Ovary (tissue), 10 donors: ENCODE measurements at regions of chr9 and their contacts with region 1.

Region 1: GRCh38 chr9:112074250-112075008 is 100.7 kb downstream of the SUSD1 start:
- DNase-seq: peak; percentile 45 to 73 (median 56)
- H3K4me3 ChIP-seq: no peak overlapping the region
- H3K27ac ChIP-seq: peak overlapping the region in 1 of 2 donors; percentile 34
- H3K4me1 ChIP-seq: no peaks in the 10 kb centered on the region
- H3K27me3 ChIP-seq: no peaks in the 10 kb centered on the region
- CTCF ChIP-seq: peak; percentile 52 to 91 (median 84)
- EP300 ChIP-seq: peak; percentile 92
- POLR2A ChIP-seq: no peak

Region 2: DNA sequence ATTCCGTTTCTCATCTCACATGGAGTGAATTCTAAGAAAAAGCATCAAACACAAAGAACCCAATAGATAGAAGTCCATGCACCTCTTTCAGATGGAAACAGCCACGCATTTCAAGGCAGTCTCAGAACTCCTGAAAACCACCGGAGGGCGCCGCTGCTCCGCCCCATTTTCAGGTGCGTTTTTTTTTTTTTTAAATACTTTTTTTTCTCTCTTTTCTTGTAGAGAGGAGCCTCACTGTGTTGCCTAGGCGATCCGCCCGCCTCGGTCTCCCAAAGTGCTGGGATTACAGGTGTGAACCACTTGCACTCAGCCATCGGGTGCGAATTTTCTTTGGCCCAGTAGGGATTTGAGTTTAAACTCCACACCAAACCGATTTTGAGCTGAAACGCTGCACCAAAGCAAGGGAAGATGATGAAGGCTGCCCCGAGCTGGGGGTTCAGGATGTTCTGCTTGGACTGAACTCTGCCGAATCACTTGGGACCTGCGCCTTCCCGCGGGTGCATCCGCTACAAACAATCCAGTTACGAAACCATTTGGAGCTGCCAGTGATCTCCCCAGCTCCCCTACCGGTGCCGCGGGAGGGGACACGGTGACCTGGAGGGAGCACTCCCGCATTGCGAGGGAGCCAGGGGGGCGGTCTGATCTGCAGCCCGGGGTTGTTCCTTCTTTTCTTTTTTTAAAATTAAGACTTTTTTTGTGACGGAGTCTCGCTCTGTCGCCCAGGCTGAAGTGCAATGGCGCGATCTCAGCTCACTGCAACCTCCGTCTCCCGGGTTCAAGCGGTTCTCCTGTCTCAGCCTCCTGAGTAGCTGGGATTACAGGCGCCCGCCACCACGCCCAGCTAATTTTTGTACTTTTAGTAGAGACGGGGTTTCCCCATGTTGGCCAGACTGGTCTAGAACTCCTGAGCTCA is 476.4 kb before region 1 on chr9:
- intact Hi-C with region 1: loop called in 2 of 4 experiments (anchors 10 kb)
- DNase-seq: peak; percentile 63 to 78 (median 68)
- H3K4me3 ChIP-seq: peak overlapping the region; percentile 93
- H3K27ac ChIP-seq: peak overlapping the region; percentile 67 to 77
- H3K4me1 ChIP-seq: no peaks in the 10 kb centered on the region
- H3K27me3 ChIP-seq: no peaks in the 10 kb centered on the region
- CTCF ChIP-seq: peak; percentile 6 to 59 (median 33)
- EP300 ChIP-seq: no peak
- POLR2A ChIP-seq: no peak

Region 3: GRCh38 chr9:111759762-111760639 is 314.4 kb before region 1 on chr9:
- intact Hi-C with region 1: loop called in 3 of 4 experiments (anchors 5 kb)
- DNase-seq: peak in 1 of 5 donors; percentile 40
- H3K4me3 ChIP-seq: no peak overlapping the region
- H3K27ac ChIP-seq: no peak overlapping the region
- H3K4me1 ChIP-seq: no peaks in the 10 kb centered on the region
- H3K27me3 ChIP-seq: no peaks in the 10 kb centered on the region
- CTCF ChIP-seq: peak; percentile 28 to 67 (median 44)
- EP300 ChIP-seq: no peak
- POLR2A ChIP-seq: no peak

Region 4: GRCh38 chr9:111839388-111839787 is 235.0 kb before region 1 on chr9:
- intact Hi-C with region 1: no loop called
- DNase-seq: no peak
- H3K4me3 ChIP-seq: no peak overlapping the region
- H3K27ac ChIP-seq: no peak overlapping the region
- H3K4me1 ChIP-seq: no peaks in the 10 kb centered on the region
- H3K27me3 ChIP-seq: no peaks in the 10 kb centered on the region
- CTCF ChIP-seq: no peak
- EP300 ChIP-seq: no peak
- POLR2A ChIP-seq: no peak